Endothelial cell of umbilical vein (primary cell): ENCODE measurements at regions of chr3 and their contacts with region 1.

Region 1: DNA sequence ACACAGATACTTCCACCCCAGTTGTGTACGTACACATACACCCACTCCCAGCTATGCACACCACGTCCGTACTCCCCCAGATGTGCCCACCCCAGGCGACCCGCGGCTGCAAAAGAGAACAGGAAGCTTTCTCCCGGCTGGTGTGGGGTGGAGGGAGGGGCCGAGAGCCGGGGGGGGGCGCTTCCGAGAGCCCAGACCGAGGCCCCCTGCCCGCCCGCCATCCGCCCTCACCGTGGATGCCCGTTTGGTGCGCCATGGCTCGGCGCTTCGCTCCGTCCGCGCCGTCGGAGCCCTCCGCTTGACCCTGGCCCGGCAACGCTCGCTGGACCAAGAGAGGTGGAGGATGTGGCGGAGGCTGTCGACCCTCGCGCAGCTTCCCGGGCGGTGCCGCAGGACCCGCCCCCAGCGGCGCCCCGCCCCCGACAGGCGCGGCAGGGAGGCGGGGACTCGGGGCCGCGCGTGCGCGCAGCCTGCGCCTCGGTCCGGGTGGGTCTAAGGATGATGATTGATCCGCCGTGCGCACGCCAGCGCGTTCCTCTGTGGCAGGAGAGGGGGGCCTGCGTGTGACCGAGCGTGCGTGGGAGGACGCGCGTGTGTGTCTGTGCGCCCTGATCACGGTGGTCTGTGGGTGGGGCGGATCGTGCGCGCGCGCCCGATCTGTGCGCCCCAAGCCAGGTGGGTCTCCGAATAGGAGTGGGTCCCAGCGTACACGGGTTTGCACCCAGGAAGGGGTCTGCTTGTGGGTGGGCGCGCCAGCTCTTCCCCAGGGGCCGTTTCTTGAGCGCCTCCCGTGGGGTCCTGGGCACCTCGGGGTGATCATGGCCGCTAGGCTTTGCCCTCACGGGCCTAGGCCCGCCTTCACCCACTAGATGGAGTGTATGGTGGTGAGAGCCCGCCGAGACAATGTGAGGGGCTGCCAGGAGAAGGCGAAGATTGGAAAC is at the start of gene TWF2:
- DNase-seq: peak; percentile 82
- H3K4me3 ChIP-seq: peak within 1 kb of the TSS; percentile 20 to 98 (median 66)
- H3K27ac ChIP-seq: peak within 1 kb of the TSS; percentile 80
- H3K4me1 ChIP-seq: peaks cover 23% of the 10 kb centered on the region
- H3K27me3 ChIP-seq: no peaks in the 10 kb centered on the region
- CTCF ChIP-seq: peak; percentile 36 to 62
- POLR2A ChIP-seq: peak; percentile 87
- total RNA-seq, gene TWF2: 82.6 and 82.9 TPM in 2 replicates

Region 2: GRCh38 chr3:52278510-52279069 is 39.6 kb after region 1 on chr3 and contains the start of gene WDR82:
- CTCF ChIA-PET with region 1: interaction called, 49 read pairs
- POLR2A ChIA-PET with region 1: interaction called, 3 read pairs
- dilution Hi-C with region 1: no loop called
- intact Hi-C with region 1: loop called (anchors 1 kb)
- DNase-seq: peak; percentile 94
- H3K4me3 ChIP-seq: peak within 1 kb of the TSS; percentile 53 to 96 (median 87)
- H3K27ac ChIP-seq: peak within 1 kb of the TSS; percentile 62
- H3K4me1 ChIP-seq: peaks cover 34% of the 10 kb centered on the region
- H3K27me3 ChIP-seq: no peaks in the 10 kb centered on the region
- CTCF ChIP-seq: peak; percentile 35 to 57
- POLR2A ChIP-seq: peak; percentile 95
- total RNA-seq, gene WDR82: 71.3 and 71.8 TPM in 2 replicates

Region 3: DNA sequence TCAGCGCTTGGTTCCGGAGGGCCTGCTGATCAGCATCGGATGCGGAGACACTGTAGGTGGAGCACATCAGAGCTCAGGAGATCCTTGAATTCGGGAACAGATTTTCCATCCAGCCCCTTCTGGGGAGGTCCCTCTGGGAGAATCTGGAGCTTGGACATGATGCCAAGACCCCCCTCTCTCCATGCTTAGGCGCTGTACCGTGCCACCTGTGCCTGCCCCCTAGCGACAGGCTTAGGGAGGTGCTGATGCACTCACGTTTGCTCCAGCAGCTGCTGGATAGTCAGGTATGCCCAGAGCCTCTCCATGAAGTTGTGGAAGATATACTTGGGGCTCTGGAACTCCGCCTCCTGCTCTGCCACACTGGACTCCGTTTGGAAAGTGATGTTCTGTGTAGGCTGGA is 581.7 kb after region 1 on chr3:
- CTCF ChIA-PET with region 1: no interaction called
- POLR2A ChIA-PET with region 1: no interaction called
- dilution Hi-C with region 1: no loop called
- intact Hi-C with region 1: no loop called
- DNase-seq: peak; percentile 13
- H3K4me3 ChIP-seq: no peak overlapping the region
- H3K27ac ChIP-seq: no peak overlapping the region
- H3K4me1 ChIP-seq: no peaks in the 10 kb centered on the region
- H3K27me3 ChIP-seq: no peaks in the 10 kb centered on the region
- CTCF ChIP-seq: peak; percentile 71 to 81
- POLR2A ChIP-seq: no peak